CD8-positive, alpha-beta memory T cell (primary cell): ENCODE measurements at regions of chr1 and their contacts with region 1.

Region 1: GRCh38 chr1:85276215-85276977 is at the start of gene BCL10:
- DNase-seq: peak; percentile 97 to 98 (median 98)
- H3K4me3 ChIP-seq: peak within 1 kb of the TSS; percentile 89
- H3K4me3 Mint-ChIP-seq: peak within 1 kb of the TSS; percentile 87 to 95 (median 90)
- H3K27ac ChIP-seq: peak within 1 kb of the TSS; percentile 88
- H3K27ac Mint-ChIP-seq: peak within 1 kb of the TSS; percentile 89 to 98 (median 94)
- H3K4me1 ChIP-seq: peaks cover 33% of the 10 kb centered on the region
- H3K4me1 Mint-ChIP-seq: peaks cover 50 to 56% (median 53%) of the 10 kb centered on the region in 3 donors
- H3K27me3 ChIP-seq: no peaks in the 10 kb centered on the region
- H3K27me3 Mint-ChIP-seq: peaks cover 3 to 4% of the 10 kb centered on the region in 2 donors
- total RNA-seq, gene BCL10: 21.9 to 27.1 TPM

Region 2: DNA sequence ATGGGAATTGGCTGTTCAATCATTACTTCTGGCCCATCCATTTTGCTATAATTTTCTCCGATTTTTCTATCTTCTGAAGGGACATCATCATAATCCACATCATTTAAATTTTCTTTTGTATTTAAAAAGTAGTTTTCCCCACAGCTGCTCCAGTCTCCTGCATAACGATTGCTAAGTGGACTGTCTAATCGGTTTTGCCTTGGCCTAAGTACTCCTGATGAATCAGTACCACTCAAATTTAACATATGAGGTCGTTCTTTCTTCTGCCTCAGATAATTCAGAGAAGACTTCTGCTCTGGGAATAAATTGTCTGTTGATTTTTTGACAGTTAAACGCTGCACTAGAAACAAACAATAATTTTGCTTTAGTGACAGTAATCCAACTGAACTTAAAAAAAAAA is 117.5 kb before region 1 on chr1:
- CTCF ChIA-PET with region 1: no interaction called
- POLR2A ChIA-PET with region 1: no interaction called
- DNase-seq: no peak
- H3K4me3 ChIP-seq: no peak overlapping the region
- H3K4me3 Mint-ChIP-seq: no peak overlapping the region
- H3K27ac ChIP-seq: no peak overlapping the region
- H3K27ac Mint-ChIP-seq: no peak overlapping the region
- H3K4me1 ChIP-seq: no peaks in the 10 kb centered on the region
- H3K4me1 Mint-ChIP-seq: no peaks in the 10 kb centered on the region
- H3K27me3 ChIP-seq: no peaks in the 10 kb centered on the region
- H3K27me3 Mint-ChIP-seq: no peaks in the 10 kb centered on the region

Region 3: DNA sequence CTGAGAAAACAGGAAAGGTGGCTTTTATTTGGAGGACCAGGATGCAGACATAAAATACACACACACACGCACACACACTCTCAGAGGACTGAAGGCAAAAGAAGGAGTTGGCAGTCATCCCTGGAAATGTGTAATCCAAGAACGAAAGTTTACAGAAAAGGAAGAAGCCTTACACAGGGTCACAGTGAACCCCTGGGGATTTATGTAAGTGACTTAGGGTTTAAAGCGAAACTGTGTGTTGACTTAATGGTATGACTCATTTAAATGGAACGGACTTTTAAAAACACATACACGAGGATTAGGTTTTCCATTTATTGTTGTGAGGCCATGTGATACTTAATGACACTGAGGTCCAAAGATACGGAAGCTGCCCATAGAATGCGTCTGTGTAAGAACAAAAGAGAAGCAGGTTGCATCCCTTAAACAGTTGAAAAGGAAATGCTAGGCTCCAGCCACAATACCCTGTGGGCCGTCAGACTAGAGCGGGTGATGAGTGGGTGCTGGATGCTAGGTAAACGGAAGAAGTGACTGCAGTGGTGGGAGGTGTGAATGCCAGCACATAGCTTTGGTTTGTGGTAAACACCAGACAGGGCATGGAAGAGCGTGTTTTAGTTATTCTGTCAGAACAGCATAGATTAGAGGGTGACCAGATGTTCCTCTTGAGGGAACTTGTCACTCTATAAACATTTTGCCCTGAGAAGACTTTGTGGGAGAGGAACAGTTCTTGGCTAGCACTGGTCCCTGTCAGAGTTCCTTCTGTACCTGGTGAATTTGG is 21.6 kb after region 1 on chr1:
- CTCF ChIA-PET with region 1: interaction called, 4 read pairs
- POLR2A ChIA-PET with region 1: interaction called, 13 read pairs
- DNase-seq: peak; percentile 10 to 83 (median 57)
- H3K4me3 ChIP-seq: no peak overlapping the region
- H3K4me3 Mint-ChIP-seq: peak overlapping the region; percentile 13 to 80 (median 70)
- H3K27ac ChIP-seq: no peak overlapping the region
- H3K27ac Mint-ChIP-seq: peak overlapping the region in 7 of 8 donors; percentile 30 to 88 (median 77)
- H3K4me1 ChIP-seq: peaks cover 19% of the 10 kb centered on the region
- H3K4me1 Mint-ChIP-seq: peaks cover 27 to 29% (median 28%) of the 10 kb centered on the region in 3 donors
- H3K27me3 ChIP-seq: peaks cover 6% of the 10 kb centered on the region
- H3K27me3 Mint-ChIP-seq: peaks cover 6 to 16% of the 10 kb centered on the region in 2 donors